Panc1 (cell line): ENCODE measurements at regions of chrX and their contacts with region 1.

Region 1: DNA sequence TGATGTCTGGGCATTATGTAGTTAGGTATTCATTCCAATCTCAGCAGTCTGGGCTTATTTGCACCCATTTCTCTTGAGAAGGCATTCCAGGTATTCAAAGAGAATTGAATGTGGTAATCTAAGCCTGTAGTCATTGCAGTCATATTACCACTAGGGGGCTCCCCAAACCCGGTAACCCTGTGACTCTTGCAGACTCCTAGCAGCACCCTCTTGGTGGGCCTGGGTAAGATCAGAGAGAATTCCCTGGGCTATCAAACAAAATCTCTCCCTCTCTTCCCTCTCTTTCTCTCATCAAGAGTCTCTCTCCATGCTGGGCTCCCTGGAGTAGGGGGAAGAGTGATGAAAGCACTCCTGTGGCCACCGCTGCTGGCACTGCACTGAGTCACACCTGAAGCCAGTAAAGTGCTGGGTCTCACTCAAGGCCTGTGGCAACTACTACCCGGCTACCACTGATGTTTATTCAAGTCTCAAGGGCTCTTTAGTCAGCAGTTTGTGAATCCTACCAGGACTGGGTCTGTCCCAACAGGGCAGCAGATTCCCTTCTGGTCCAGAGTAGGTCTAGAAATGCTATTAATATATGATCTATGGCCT is 187.7 kb upstream of the NUDT10 start:
- DNase-seq: peak; percentile 18
- ATAC-seq: no peak; the same call in 1 of the 2 replicates
- H3K4me3 ChIP-seq: no peak overlapping the region
- H3K27ac ChIP-seq: no peak overlapping the region
- H3K4me1 ChIP-seq: no peaks in the 10 kb centered on the region
- H3K27me3 ChIP-seq: no peaks in the 10 kb centered on the region
- CTCF ChIP-seq: peak; percentile 79

Region 2: GRCh38 chrX:51158231-51158787 is 13.4 kb after region 1 on chrX:
- CTCF ChIA-PET with region 1: no interaction called
- POLR2A ChIA-PET with region 1: no interaction called
- in situ Hi-C with region 1: no loop called
- intact Hi-C with region 1: no loop called
- DNase-seq: no peak
- ATAC-seq: no peak
- H3K4me3 ChIP-seq: no peak overlapping the region
- H3K27ac ChIP-seq: no peak overlapping the region
- H3K4me1 ChIP-seq: no peaks in the 10 kb centered on the region
- H3K27me3 ChIP-seq: no peaks in the 10 kb centered on the region
- CTCF ChIP-seq: no peak

Region 3: GRCh38 chrX:51461053-51462044 is 316.4 kb after region 1 on chrX:
- CTCF ChIA-PET with region 1: interaction called, 5 read pairs
- POLR2A ChIA-PET with region 1: no interaction called
- in situ Hi-C with region 1: no loop called
- intact Hi-C with region 1: loop called (anchors 10 kb)
- DNase-seq: peak; percentile 47
- ATAC-seq: no peak
- H3K4me3 ChIP-seq: no peak overlapping the region
- H3K27ac ChIP-seq: no peak overlapping the region
- H3K4me1 ChIP-seq: no peaks in the 10 kb centered on the region
- H3K27me3 ChIP-seq: no peaks in the 10 kb centered on the region
- CTCF ChIP-seq: peak; percentile 77